ENCODE measurements at regions of chr2 and their contacts with region 1.

Region 1: GRCh38 chr2:191165176-191165643 is 14.4 kb upstream of the STAT4 start:
- DNase-seq: peak; percentile 46
- H3K4me3 Mint-ChIP-seq: no peak overlapping the region
- H3K27ac Mint-ChIP-seq: peak overlapping the region; percentile 65
- H3K4me1 Mint-ChIP-seq: peaks cover 21% of the 10 kb centered on the region
- H3K27me3 Mint-ChIP-seq: peaks cover 2% of the 10 kb centered on the region

Region 2: DNA sequence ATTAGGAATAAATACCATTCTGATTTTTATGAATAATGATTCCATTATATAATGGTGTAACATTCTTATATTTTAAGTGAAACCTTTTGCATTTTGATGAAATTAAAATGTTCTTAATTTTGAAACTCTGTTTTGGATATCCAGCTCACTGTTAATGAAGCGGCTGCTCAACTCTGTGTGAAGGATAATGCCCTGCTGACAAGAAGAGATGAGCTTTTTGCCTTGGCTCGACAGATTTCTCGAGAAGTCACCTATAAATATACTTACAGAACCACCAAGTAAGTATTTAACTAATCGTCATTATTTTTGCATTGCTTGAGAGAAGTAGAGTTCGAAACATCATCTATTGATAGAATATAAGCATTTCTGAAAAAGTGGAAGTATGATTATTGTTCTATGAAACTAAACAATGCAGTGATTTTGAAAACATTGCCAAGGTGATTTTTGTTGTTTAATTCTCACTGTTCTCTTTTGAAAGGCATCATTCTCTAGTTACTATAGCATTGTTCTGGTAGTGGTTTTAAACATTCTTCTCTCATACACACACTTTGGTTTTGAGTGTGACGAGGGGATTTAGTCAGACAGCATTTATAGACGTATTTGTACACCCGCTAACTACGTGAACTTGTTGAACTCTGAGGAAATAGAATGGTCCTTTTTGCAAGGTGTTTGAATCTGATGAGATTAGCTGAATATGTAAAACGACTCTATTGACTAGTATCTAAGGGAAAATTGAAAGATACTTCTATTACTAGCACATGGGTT is 494.8 kb before region 1 on chr2:
- CTCF ChIA-PET with region 1: no interaction called
- intact Hi-C with region 1: no loop called
- DNase-seq: no peak
- H3K4me3 Mint-ChIP-seq: no peak overlapping the region
- H3K27ac Mint-ChIP-seq: no peak overlapping the region
- H3K4me1 Mint-ChIP-seq: peaks cover 34% of the 10 kb centered on the region
- H3K27me3 Mint-ChIP-seq: no peaks in the 10 kb centered on the region

Region 3: GRCh38 chr2:190822043-190822442 is 343.2 kb before region 1 on chr2:
- CTCF ChIA-PET with region 1: no interaction called
- intact Hi-C with region 1: no loop called
- DNase-seq: no peak
- H3K4me3 Mint-ChIP-seq: no peak overlapping the region
- H3K27ac Mint-ChIP-seq: no peak overlapping the region
- H3K4me1 Mint-ChIP-seq: no peaks in the 10 kb centered on the region
- H3K27me3 Mint-ChIP-seq: no peaks in the 10 kb centered on the region

Region 4: GRCh38 chr2:191051825-191052778 is 113.1 kb before region 1 on chr2:
- CTCF ChIA-PET with region 1: interaction called, 63 read pairs
- intact Hi-C with region 1: no loop called
- DNase-seq: no peak
- H3K4me3 Mint-ChIP-seq: no peak overlapping the region
- H3K27ac Mint-ChIP-seq: no peak overlapping the region
- H3K4me1 Mint-ChIP-seq: peaks cover 19% of the 10 kb centered on the region
- H3K27me3 Mint-ChIP-seq: no peaks in the 10 kb centered on the region

Region 5: DNA sequence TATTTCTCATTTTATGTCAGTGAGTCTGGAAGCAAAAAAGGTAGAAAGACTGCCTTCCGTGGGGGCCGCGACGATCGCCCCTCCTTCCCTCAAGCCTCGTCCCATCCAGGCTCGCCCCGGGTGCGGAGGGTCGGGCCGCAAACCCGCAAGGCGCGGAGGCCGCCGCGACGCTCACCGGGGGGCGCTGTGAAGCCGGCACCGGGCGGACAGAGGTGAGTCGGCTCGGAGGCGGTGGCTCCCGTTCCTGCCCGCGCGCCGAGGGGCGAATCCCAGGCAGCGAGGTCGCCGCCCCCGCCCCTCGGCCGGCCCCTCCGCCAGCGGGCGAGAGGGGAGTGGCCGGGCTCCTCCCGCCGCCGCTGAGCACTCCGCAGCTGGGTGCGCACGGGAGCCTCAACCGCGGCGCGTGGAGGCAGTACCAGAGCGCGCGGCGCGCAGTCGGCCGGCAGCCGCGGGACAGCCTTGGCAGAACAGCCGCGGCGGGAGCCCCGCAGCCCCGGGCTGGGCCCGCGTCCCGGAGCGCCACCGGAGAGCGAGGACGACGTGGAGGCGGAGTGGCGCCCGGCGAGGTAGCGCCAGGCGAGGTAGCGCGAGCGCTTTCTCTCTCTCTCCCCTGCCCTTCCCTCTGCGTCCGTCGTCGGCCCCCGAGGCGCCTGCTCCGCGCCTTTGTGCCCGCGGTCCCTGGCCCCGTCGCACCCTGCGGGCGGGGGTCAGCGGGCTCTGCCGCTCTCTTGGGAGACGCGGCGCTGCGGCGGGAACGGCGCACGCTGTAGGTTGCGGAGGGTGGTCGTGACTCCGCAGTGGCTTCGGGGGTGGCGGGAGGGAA is 80.0 kb after region 1 on chr2 and contains the start of gene MYO1B:
- CTCF ChIA-PET with region 1: interaction called, 3 read pairs
- intact Hi-C with region 1: loop called (anchors 1 kb)
- DNase-seq: peak; percentile 79
- H3K4me3 Mint-ChIP-seq: peak within 1 kb of the TSS; percentile 82
- H3K27ac Mint-ChIP-seq: peak within 1 kb of the TSS; percentile 22
- H3K4me1 Mint-ChIP-seq: peaks cover 21% of the 10 kb centered on the region
- H3K27me3 Mint-ChIP-seq: no peaks in the 10 kb centered on the region
- total RNA-seq, gene MYO1B: 39.2 to 40.5 TPM

Region 6: GRCh38 chr2:191386938-191387536 is 221.8 kb after region 1 on chr2:
- CTCF ChIA-PET with region 1: interaction called, 5 read pairs
- intact Hi-C with region 1: loop called (anchors 5 kb)
- DNase-seq: no peak
- H3K4me3 Mint-ChIP-seq: no peak overlapping the region
- H3K27ac Mint-ChIP-seq: no peak overlapping the region
- H3K4me1 Mint-ChIP-seq: peaks cover 13% of the 10 kb centered on the region
- H3K27me3 Mint-ChIP-seq: no peaks in the 10 kb centered on the region

Region 7: GRCh38 chr2:191521608-191522208 is 356.5 kb after region 1 on chr2:
- CTCF ChIA-PET with region 1: interaction called, 32 read pairs
- intact Hi-C with region 1: loop called (anchors 1 kb)
- DNase-seq: no peak
- H3K4me3 Mint-ChIP-seq: no peak overlapping the region
- H3K27ac Mint-ChIP-seq: no peak overlapping the region
- H3K4me1 Mint-ChIP-seq: no peaks in the 10 kb centered on the region
- H3K27me3 Mint-ChIP-seq: no peaks in the 10 kb centered on the region

Region 8: DNA sequence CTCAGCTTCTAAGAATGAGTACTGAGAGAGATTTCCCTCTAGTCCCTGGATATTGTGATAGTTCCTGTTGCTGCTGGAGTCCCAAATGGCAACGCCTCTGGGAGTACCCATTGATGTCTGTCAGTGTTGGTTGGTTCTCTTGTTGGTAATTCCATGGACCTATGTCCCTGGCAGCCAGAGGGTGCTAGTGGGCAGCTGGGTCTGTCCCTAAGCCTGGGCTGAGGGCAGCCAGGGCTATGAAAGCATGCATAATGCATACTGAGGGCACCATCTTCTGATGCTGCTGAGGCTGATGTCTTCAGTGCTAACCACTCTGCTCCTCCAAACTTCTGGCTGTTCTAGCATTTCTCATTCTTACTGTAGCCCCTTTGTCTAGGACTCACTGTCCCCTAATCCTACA is 548.6 kb after region 1 on chr2:
- CTCF ChIA-PET with region 1: no interaction called
- intact Hi-C with region 1: no loop called
- DNase-seq: peak; percentile 46
- H3K4me3 Mint-ChIP-seq: no peak overlapping the region
- H3K27ac Mint-ChIP-seq: no peak overlapping the region
- H3K4me1 Mint-ChIP-seq: no peaks in the 10 kb centered on the region
- H3K27me3 Mint-ChIP-seq: no peaks in the 10 kb centered on the region

Region 9: GRCh38 chr2:191811807-191812602 is 646.8 kb after region 1 on chr2:
- CTCF ChIA-PET with region 1: no interaction called
- intact Hi-C with region 1: loop called (anchors 10 kb)
- DNase-seq: peak; percentile 69
- H3K4me3 Mint-ChIP-seq: no peak overlapping the region
- H3K27ac Mint-ChIP-seq: no peak overlapping the region
- H3K4me1 Mint-ChIP-seq: no peaks in the 10 kb centered on the region
- H3K27me3 Mint-ChIP-seq: peaks cover 7% of the 10 kb centered on the region